ENCODE measurements at regions of chr12 and their contacts with region 1.

Region 1: DNA sequence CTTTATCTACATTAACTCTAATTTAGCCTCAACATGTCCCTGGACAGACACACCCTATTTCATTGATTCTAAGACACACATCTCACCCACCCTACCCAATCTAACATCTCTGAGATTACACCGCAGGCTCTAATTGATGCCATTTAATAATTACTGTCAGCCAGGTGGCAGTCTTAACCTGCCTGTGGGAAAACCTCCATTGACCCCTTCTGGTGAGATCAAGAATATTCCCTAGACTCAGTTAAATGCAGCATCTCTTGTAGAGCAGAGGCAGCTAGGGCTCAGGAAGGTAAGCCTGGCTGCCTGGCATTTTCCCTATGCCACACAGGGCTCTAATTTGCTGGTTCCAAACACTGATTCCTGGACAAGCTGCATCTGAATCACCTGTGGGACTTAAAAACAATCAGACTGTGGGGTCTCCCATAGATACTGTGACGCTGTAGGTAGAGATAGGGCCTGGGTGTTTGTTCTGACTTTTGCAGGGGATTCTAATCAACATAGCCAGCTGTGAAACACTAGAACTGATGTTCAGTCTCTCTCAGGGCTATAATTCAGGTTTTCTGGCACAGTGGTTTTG is 14.3 kb downstream of the MCRS1 start:
- DNase-seq: peak in 2 of 9 experiments; percentile 60 to 70
- ATAC-seq: peak; percentile 68
- H3K4me3 ChIP-seq: no peak overlapping the region
- H3K4me3 Mint-ChIP-seq: no peak overlapping the region
- H3K27ac ChIP-seq: no peak overlapping the region
- H3K27ac Mint-ChIP-seq: peak overlapping the region; percentile 7
- H3K4me1 ChIP-seq: peaks cover 10% of the 10 kb centered on the region
- H3K4me1 Mint-ChIP-seq: peaks cover 23% of the 10 kb centered on the region
- H3K27me3 ChIP-seq: peaks cover 0 to 4% of the 10 kb centered on the region in 2 experiments
- H3K27me3 Mint-ChIP-seq: no peaks in the 10 kb centered on the region
- CTCF ChIP-seq: peak; percentile 53

Region 2: DNA sequence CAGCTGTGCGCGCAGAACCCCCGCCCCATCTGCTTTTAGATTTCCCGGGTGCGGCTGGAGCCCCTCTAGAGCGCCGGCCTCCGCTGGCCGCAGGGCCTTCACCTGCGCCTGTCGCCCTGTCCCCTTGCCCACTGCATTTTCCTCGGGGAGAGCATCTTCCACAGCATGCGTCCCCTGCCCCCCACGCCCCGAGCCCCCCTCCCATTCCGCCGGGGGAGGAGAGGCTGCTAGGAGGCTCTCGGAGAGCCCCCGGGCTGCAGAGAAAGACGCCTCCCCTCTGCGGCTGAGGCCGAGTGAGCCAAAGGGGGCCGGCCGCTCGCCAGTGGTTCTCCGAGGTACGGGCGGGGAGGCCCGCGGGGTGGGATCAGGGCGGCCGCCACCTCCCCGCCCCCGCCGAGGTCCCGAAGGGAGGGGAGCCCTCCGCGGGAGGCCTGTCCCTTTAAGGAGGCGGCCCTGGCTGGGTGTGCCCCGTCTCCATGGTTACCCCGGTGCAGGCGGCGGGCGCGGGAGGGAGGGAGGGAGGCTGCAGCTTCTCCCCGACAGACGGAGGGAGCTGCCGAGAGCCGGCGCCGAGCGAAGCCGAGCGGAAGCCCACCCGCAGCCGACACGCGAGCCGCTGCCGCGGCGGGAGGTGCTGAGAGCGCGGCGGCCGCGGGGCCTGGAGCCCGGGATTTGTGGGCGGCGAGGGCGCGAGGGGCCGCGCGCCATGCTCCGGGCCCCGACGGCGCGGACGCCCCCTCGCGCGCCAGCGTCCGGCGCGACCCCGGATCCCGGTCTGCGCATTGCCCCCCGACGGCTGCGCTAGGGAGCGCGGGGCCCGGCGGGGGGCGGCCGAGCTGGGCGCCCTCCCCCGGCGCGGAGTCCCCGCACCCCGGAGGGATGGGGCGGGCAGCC is 14.8 kb before region 1 on chr12 and contains the start of gene KCNH3:
- CTCF ChIA-PET with region 1: interaction called, 4 read pairs
- POLR2A ChIA-PET with region 1: interaction called, 4 read pairs
- intact Hi-C with region 1: loop called in 1 of 2 experiments (anchors 1 kb)
- DNase-seq: peak; percentile 79 to 95 (median 91)
- ATAC-seq: peak; percentile 90
- H3K4me3 ChIP-seq: peak within 1 kb of the TSS; percentile 49 to 76
- H3K4me3 Mint-ChIP-seq: peak within 1 kb of the TSS; percentile 80
- H3K27ac ChIP-seq: no peak within 1 kb of the TSS
- H3K27ac Mint-ChIP-seq: no peak within 1 kb of the TSS
- H3K4me1 ChIP-seq: peaks cover 23% of the 10 kb centered on the region
- H3K4me1 Mint-ChIP-seq: peaks cover 33% of the 10 kb centered on the region
- H3K27me3 ChIP-seq: peaks cover 0 to 6% of the 10 kb centered on the region in 2 experiments
- H3K27me3 Mint-ChIP-seq: no peaks in the 10 kb centered on the region
- CTCF ChIP-seq: no peak
- total RNA-seq, gene KCNH3: 3.1 to 3.5 TPM

Region 3: GRCh38 chr12:49580572-49581535 is 27.3 kb after region 1 on chr12:
- CTCF ChIA-PET with region 1: interaction called, 13 read pairs
- POLR2A ChIA-PET with region 1: no interaction called
- intact Hi-C with region 1: loop called (anchors 1 to 2 kb)
- DNase-seq: peak in 8 of 9 experiments; percentile 43 to 69 (median 61)
- ATAC-seq: peak; percentile 86
- H3K4me3 ChIP-seq: no peak overlapping the region
- H3K4me3 Mint-ChIP-seq: no peak overlapping the region
- H3K27ac ChIP-seq: no peak overlapping the region
- H3K27ac Mint-ChIP-seq: no peak overlapping the region
- H3K4me1 ChIP-seq: no peaks in the 10 kb centered on the region
- H3K4me1 Mint-ChIP-seq: peaks cover 11% of the 10 kb centered on the region
- H3K27me3 ChIP-seq: no peaks in the 10 kb centered on the region
- H3K27me3 Mint-ChIP-seq: no peaks in the 10 kb centered on the region
- CTCF ChIP-seq: peak; percentile 69